ENCODE measurements at regions of chr14 and their contacts with region 1.

Region 1: GRCh38 chr14:51744372-51745130 is 92.8 kb downstream of the FRMD6 start:
- DNase-seq: peak; percentile 21
- H3K4me3 Mint-ChIP-seq: no peak overlapping the region
- H3K27ac Mint-ChIP-seq: no peak overlapping the region
- H3K4me1 Mint-ChIP-seq: no peaks in the 10 kb centered on the region
- H3K27me3 Mint-ChIP-seq: no peaks in the 10 kb centered on the region

Region 2: DNA sequence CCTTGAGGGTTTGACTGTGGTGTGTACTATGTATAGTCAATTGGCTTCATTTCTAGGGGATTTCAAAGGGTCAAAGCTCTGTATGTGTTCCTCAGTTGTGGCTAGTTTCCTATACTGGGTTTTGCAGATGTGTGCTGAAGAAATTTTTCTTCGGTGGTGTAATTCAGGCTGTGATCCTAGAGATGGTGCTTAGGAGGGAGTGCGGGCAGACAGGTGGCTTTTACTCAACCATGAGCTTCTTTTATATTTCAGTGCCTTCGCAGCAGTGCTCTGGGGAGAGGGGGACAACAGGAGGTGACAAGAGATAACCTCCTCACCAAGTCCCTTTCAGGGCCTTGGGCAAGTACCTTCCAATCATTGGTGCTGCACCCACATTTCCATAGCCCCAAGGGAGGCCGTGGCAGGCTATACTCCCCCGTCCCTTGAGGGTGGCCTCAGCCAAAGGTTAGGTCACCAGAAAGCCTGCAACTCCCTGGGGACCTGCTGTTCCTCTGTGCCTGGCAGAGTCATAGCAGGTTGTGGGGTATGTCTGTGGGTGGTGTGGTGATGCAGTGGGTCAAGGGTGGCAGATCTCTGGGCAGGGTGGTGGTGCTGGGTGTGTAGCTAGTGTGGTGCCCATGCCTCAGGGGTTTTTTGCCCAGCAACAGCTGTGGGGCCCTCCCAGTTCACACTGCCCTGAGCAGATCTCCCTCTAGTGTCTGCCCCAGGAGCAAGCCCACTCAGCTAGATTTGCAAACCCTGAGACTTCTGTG is 541.5 kb before region 1 on chr14:
- intact Hi-C with region 1: no loop called
- DNase-seq: no peak
- H3K4me3 Mint-ChIP-seq: no peak overlapping the region
- H3K27ac Mint-ChIP-seq: no peak overlapping the region
- H3K4me1 Mint-ChIP-seq: no peaks in the 10 kb centered on the region
- H3K27me3 Mint-ChIP-seq: peaks cover 14% of the 10 kb centered on the region

Region 3: DNA sequence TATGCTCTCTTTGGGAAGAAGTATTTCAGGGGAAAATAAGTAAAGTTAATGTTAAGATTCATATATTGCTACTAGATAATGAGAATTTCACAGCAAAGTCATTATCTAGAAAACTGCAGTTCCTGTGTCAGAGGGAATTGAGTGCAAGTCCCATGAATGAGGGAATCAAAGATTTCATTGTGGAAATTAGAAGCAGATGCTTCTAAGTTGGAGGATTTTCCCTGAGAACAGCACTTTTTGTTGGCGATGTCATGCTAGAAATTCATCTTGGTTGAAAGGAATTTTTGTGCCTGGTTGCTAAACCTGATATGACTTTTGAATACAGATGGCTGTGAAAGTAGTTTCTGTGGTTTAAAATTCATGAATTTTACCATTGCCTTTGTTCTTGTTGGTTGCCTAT is 67.3 kb before region 1 on chr14:
- intact Hi-C with region 1: loop called (anchors 1 kb)
- DNase-seq: no peak
- H3K4me3 Mint-ChIP-seq: no peak overlapping the region
- H3K27ac Mint-ChIP-seq: no peak overlapping the region
- H3K4me1 Mint-ChIP-seq: peaks cover 7% of the 10 kb centered on the region
- H3K27me3 Mint-ChIP-seq: peaks cover 8% of the 10 kb centered on the region

Region 4: DNA sequence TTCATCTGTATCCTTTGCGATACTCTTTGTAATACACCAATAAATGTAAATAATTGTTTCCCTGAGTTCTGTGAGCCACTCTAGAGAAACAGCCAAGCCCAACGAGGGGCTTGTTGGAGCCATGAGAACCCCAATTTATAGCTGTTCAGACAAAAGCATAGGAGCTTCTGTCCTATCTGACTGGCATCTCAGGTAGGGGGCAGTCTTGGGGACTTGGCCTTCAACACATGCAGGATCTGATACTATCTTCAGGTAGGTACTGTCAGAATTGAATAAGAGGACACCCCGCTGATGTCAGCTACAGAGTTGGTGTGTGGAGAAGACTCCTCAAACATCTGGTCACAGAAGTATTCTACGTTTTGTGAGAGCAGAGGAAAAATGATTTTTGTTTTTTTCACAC is 782.5 kb after region 1 on chr14:
- intact Hi-C with region 1: loop called (anchors 5 kb)
- DNase-seq: no peak
- H3K4me3 Mint-ChIP-seq: no peak overlapping the region
- H3K27ac Mint-ChIP-seq: no peak overlapping the region
- H3K4me1 Mint-ChIP-seq: no peaks in the 10 kb centered on the region
- H3K27me3 Mint-ChIP-seq: no peaks in the 10 kb centered on the region

Measured in activated T-helper 1 cell treated with anti-CD3 and anti-CD28 coated beads, Interleukin-12 subunit alpha, Interleukin-12 subunit beta, Interleukin-2, Interleukin-4 antibody, amounts not matched to agents 30 ng/mL and 10 ng/mL and 1 ng/mL, durations not matched to agents 14 hours and 24 hours and 36 hours (primary cell).